H1 (cell line): ENCODE measurements at regions of chr6 and their contacts with region 1.

Region 1: GRCh38 chr6:158660333-158660754 is 10.5 kb downstream of the SYTL3 start:
- DNase-seq: peak in 1 of 2 experiments; percentile 61
- H3K4me3 ChIP-seq: no peak overlapping the region
- H3K27ac ChIP-seq: no peak overlapping the region
- H3K4me1 ChIP-seq: peaks cover 0 to 8% (median 4%) of the 10 kb centered on the region in 4 experiments; a peak in 4 of 7 replicates
- H3K27me3 ChIP-seq: no peaks in the 10 kb centered on the region; a peak in 1 of 7 replicates
- CTCF ChIP-seq: peak; percentile 52 to 69 (median 67)
- EP300 ChIP-seq: no peak
- POLR2A ChIP-seq: no peak
- RAD21 ChIP-seq: peak; percentile 61 to 70

Region 2: GRCh38 chr6:158595223-158595622 is 65.1 kb before region 1 on chr6:
- CTCF ChIA-PET with region 1: no interaction called
- POLR2A ChIA-PET with region 1: no interaction called
- DNase-seq: no peak
- H3K4me3 ChIP-seq: no peak overlapping the region
- H3K27ac ChIP-seq: no peak overlapping the region
- H3K4me1 ChIP-seq: no peaks in the 10 kb centered on the region
- H3K27me3 ChIP-seq: no peaks in the 10 kb centered on the region; a peak in 1 of 7 replicates
- CTCF ChIP-seq: no peak
- EP300 ChIP-seq: no peak
- POLR2A ChIP-seq: no peak
- RAD21 ChIP-seq: no peak

Region 3: DNA sequence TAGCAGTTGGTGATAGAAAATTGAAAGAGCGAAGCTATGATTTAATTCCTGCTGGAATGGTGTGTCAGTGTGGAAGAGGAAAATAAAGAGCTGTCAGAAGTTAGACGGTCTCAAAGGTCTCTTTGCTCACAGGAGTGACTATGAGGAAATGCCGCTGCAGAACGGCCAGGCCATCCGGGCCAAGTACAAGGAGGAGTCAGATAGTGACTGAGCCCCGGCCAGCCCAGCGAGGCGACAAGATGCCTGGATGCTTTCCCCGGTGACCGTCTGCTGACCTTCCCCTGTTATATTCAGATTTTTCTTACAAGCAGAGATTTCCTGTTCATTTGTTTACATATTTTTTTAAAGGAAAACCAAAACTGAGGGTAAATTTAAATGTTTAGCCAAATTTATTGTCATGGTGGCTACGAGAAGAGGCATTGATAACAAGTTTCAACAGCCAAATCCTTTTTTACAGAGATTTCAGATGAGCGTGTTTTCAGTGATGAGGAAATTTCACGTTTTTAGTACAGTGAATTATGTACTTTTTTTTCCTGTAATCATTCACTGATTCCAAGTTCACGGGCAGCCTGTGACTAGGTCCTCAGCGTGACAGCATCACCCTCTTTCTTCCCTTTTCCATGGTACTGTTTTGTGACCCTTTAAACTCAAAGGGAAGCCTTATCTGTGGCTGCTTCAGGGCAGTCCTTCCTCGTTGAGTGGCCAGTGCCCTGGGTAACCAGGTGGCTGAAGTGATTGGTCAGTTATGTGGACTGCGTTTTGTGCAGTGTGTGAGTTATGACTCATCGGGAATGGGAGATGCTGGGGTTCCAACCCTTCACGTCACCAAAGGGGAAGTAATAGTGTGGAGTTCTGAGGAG is 28.4 kb before region 1 on chr6:
- CTCF ChIA-PET with region 1: interaction called, 10 read pairs
- POLR2A ChIA-PET with region 1: no interaction called
- DNase-seq: no peak
- H3K4me3 ChIP-seq: no peak overlapping the region
- H3K27ac ChIP-seq: no peak overlapping the region
- H3K4me1 ChIP-seq: peaks cover 0 to 7% (median 0%) of the 10 kb centered on the region in 4 experiments; a peak in 3 of 7 replicates
- H3K27me3 ChIP-seq: no peaks in the 10 kb centered on the region
- CTCF ChIP-seq: no peak
- EP300 ChIP-seq: no peak
- POLR2A ChIP-seq: no peak
- RAD21 ChIP-seq: no peak

Region 4: GRCh38 chr6:158649289-158650143 is 10.8 kb before region 1 on chr6 and contains the start of gene SYTL3:
- CTCF ChIA-PET with region 1: interaction called, 73 read pairs
- POLR2A ChIA-PET with region 1: interaction called, 9 read pairs
- DNase-seq: no peak
- H3K4me3 ChIP-seq: no peak within 1 kb of the TSS
- H3K27ac ChIP-seq: no peak within 1 kb of the TSS
- H3K4me1 ChIP-seq: peaks cover 0 to 4% (median 1%) of the 10 kb centered on the region in 4 experiments; a peak in 1 of 7 replicates
- H3K27me3 ChIP-seq: peaks cover 0 to 4% (median 0%) of the 10 kb centered on the region in 4 experiments; a peak in 2 of 7 replicates
- CTCF ChIP-seq: no peak
- EP300 ChIP-seq: no peak
- POLR2A ChIP-seq: no peak
- RAD21 ChIP-seq: no peak
- total RNA-seq, gene SYTL3: 0.42 and 0.99 TPM in 2 replicates

Region 5: DNA sequence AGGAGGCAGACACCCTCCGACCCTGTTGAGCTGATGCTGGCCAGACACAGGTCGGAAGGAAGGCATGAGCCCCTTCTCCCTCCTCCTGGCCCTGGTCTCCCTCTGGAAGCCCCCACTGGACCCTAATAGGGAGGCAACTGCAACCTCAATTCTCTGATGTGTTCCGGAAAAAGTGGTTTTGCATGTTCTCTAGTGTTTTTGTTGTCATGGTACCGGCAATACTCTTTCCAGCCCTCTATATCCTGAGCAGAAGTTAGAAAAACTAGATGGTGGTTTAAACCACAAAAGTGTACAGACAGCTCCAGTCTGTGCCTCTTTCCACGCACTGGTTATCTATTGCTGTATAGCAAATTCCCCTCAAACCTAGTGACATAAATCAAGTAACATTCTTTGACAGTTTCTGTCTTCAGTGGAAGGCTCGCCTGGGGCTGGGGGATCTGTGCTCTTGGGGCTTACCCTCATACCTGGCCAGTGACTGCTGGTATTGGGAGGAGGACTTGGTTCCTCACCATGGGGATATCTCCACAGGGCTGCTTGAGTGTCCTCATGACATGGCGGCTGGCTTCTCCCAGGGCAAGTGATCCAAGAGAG is 26.5 kb after region 1 on chr6:
- CTCF ChIA-PET with region 1: interaction called, 104 read pairs
- POLR2A ChIA-PET with region 1: no interaction called
- DNase-seq: no peak
- H3K4me3 ChIP-seq: no peak overlapping the region
- H3K27ac ChIP-seq: no peak overlapping the region
- H3K4me1 ChIP-seq: no peaks in the 10 kb centered on the region
- H3K27me3 ChIP-seq: no peaks in the 10 kb centered on the region
- CTCF ChIP-seq: no peak
- EP300 ChIP-seq: no peak
- POLR2A ChIP-seq: no peak
- RAD21 ChIP-seq: no peak

Region 6: GRCh38 chr6:158704181-158704822 is 44.0 kb after region 1 on chr6:
- CTCF ChIA-PET with region 1: interaction called, 13 read pairs
- POLR2A ChIA-PET with region 1: no interaction called
- DNase-seq: peak; percentile 41 to 97
- H3K4me3 ChIP-seq: peak overlapping the region in 3 of 4 experiments; percentile 4 to 46 (median 19); a peak in 3 of 8 replicates
- H3K27ac ChIP-seq: no peak overlapping the region
- H3K4me1 ChIP-seq: peaks cover 0 to 4% (median 1%) of the 10 kb centered on the region in 4 experiments; a peak in 1 of 7 replicates
- H3K27me3 ChIP-seq: no peaks in the 10 kb centered on the region
- CTCF ChIP-seq: peak; percentile 93 to 94 (median 94)
- EP300 ChIP-seq: no peak
- POLR2A ChIP-seq: no peak
- RAD21 ChIP-seq: peak; percentile 95

Region 7: DNA sequence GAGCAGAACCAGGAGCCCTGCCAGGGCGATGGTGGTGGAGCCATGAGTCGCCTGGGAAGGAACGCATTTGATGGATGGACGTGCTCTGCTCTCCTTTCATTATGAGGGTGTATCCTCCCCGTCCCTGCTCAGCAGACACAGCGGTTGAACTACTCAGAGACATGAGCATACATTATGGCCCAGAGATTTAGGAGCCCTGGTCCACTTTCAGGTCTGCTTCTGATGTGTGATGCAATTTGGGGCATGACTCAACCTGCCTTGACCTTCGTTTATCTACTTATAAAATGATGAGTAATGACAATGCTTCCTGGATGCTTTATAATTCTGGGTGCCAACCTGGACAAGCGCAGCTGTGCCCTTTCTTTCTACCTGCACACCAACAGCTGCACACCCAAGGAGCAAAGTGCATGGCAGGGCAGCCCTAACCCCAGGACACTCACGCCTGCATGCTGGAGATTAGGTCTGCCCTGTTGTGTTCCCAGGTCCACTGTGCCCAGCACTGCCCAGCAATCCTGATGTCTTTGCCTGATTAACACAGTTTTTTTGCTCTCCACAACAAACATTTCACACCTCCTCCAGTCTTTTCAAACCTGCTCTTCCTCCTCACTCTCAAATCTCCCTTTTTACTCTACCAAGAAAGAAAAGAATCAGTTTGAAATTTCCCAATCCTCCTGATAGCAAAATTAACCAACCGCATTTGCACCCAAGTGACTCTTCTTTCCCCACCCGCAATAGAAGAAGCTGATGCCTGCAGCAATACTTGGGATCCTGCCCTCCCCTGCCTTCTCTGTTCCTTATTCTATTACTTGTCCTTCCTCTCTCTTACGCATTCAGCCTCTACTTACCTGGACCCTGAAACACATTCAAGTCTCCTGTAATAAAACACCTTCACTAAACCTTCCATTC is 77.6 kb after region 1 on chr6:
- CTCF ChIA-PET with region 1: no interaction called
- POLR2A ChIA-PET with region 1: no interaction called
- DNase-seq: no peak
- H3K4me3 ChIP-seq: no peak overlapping the region
- H3K27ac ChIP-seq: no peak overlapping the region
- H3K4me1 ChIP-seq: no peaks in the 10 kb centered on the region
- H3K27me3 ChIP-seq: no peaks in the 10 kb centered on the region
- CTCF ChIP-seq: no peak
- EP300 ChIP-seq: no peak
- POLR2A ChIP-seq: no peak
- RAD21 ChIP-seq: no peak